A673 (cell line): ENCODE measurements at regions of chrX and their contacts with region 1.

Region 1: DNA sequence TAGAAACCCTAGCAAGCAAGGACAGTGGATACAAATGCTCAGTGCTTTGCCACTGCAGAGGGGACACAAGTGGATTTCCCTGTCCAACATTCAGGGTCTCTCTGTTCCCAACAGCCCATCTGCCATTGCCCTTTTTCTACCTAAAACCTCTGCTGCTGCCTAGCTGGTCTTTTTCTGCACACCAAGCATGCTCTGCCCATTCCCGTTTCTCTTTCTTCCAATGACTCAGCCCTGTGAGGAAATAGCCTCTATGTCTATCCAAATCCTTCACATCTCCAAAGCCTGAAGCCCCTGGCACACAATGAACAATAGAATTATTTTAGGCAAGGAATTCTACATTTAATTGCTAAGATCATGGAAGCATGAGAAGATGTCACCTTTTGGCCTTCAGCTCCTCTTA is 5.7 kb upstream of the AMELX start:
- DNase-seq: no peak
- H3K4me3 ChIP-seq: no peak overlapping the region
- H3K27ac ChIP-seq: no peak overlapping the region
- H3K4me1 ChIP-seq: no peaks in the 10 kb centered on the region
- H3K27me3 ChIP-seq: peaks cover 22% of the 10 kb centered on the region
- CTCF ChIP-seq: no peak

Region 2: GRCh38 chrX:10615931-10616775 is 671.4 kb before region 1 on chrX:
- CTCF ChIA-PET with region 1: no interaction called
- POLR2A ChIA-PET with region 1: no interaction called
- intact Hi-C with region 1: no loop called
- DNase-seq: peak; percentile 58
- H3K4me3 ChIP-seq: no peak overlapping the region
- H3K27ac ChIP-seq: no peak overlapping the region
- H3K4me1 ChIP-seq: peaks cover 12% of the 10 kb centered on the region
- H3K27me3 ChIP-seq: no peaks in the 10 kb centered on the region
- CTCF ChIP-seq: peak; percentile 65

Region 3: GRCh38 chrX:11196476-11196875 is 91.0 kb before region 1 on chrX:
- CTCF ChIA-PET with region 1: no interaction called
- POLR2A ChIA-PET with region 1: no interaction called
- intact Hi-C with region 1: no loop called
- DNase-seq: no peak
- H3K4me3 ChIP-seq: no peak overlapping the region
- H3K27ac ChIP-seq: no peak overlapping the region
- H3K4me1 ChIP-seq: no peaks in the 10 kb centered on the region
- H3K27me3 ChIP-seq: no peaks in the 10 kb centered on the region
- CTCF ChIP-seq: no peak

Region 4: GRCh38 chrX:11665144-11666111 is 377.9 kb after region 1 on chrX and contains the start of gene ARHGAP6:
- CTCF ChIA-PET with region 1: interaction called, 14 read pairs
- POLR2A ChIA-PET with region 1: no interaction called
- intact Hi-C with region 1: no loop called
- DNase-seq: no peak
- H3K4me3 ChIP-seq: peak within 1 kb of the TSS; percentile 17
- H3K27ac ChIP-seq: no peak within 1 kb of the TSS
- H3K4me1 ChIP-seq: no peaks in the 10 kb centered on the region
- H3K27me3 ChIP-seq: peaks cover 82% of the 10 kb centered on the region
- CTCF ChIP-seq: no peak
- total RNA-seq, gene ARHGAP6: 0.15 TPM in 1 of 2 replicates, not detected in the other